Prostate gland (tissue), 2 donors: ENCODE measurements at regions of chr10 and their contacts with region 1.

Region 1: GRCh38 chr10:103605359-103606095 is 112.0 kb downstream of the NEURL1 start:
- DNase-seq: peak; percentile 24
- H3K4me3 ChIP-seq: no peak overlapping the region
- H3K27ac ChIP-seq: no peak overlapping the region
- H3K4me1 ChIP-seq: no peaks in the 10 kb centered on the region
- H3K27me3 ChIP-seq: no peaks in the 10 kb centered on the region
- CTCF ChIP-seq: peak; percentile 45 to 82 (median 62)
- POLR2A ChIP-seq: no peak

Region 2: DNA sequence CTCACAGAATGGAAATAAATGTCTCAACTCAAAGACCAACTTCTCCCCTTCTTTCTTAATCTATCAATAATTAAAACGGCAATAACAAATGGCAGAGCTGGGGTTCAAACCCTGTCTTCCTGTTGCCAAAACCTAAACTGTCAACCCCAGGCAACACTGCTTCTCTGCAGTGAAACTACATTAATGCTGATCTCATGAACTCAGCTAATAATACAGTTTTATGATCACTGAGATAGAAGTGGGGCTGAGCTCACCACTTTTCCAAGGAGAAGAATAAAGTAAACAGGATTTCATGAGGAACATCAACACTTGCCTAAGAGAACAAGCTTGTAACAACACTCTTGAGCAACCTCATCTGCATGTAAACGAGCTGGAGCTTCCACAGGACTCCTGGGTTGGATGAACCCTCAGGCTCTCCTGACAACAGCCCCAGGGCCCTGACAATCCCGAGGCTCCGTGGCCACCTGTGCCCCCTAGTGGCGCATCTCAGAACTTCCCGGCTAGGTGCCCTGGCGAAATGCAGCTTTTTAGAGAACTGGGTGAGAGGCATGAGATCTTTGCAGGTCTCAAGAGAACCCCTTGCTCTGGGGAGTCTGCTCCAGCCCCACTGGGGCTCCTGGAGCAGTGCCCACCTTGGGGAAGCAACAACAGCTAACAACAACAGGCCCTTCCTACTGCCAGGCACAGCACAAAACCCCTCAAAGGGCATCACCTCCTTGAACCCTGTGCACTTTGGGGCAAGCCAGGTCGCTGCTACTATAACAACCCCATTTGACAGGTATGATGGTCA is 80.5 kb after region 1 on chr10:
- intact Hi-C with region 1: loop called (anchors 2 kb)
- DNase-seq: peak; percentile 60
- H3K4me3 ChIP-seq: no peak overlapping the region
- H3K27ac ChIP-seq: peak overlapping the region; percentile 10 to 45
- H3K4me1 ChIP-seq: no peaks in the 10 kb centered on the region
- H3K27me3 ChIP-seq: no peaks in the 10 kb centered on the region
- CTCF ChIP-seq: peak; percentile 92 to 95 (median 95)
- POLR2A ChIP-seq: no peak

Region 3: DNA sequence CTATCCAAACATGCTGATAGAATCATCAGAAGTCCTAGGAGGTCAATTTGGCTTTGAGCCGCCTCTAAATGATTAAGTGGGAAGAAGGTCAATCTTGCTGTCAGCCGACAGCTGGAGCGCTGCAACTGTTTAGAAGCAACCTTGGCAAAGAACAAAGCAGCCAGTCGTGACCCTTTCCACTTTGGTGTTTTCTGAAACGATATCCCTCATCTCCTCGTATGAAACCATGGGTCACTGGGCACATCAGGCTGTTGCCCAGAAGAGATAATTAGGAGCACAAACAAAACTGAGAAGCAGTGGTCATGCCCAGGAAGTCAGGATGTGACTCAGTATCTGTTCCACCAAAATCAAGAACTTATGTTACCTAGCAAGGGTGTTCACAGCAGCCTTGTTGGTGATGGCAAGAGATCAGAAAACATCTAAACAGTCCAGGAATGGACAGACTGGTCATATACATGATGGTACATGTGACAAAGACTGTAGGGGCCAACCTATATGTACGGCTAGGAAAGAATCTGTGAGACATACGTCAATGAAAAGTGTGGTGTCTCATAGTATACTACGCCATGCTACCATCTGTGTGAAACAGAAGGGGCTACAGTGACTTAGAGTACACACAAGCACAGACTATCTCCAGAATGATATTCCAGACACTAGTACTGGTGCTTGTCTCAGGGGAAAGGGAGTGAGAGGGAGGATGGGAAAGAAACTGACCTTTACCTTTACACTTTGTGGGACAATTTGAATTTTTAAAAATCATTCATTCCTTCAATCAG is 290.1 kb after region 1 on chr10:
- intact Hi-C with region 1: no loop called
- DNase-seq: no peak
- H3K4me3 ChIP-seq: no peak overlapping the region
- H3K27ac ChIP-seq: peak overlapping the region; percentile 20 to 26
- H3K4me1 ChIP-seq: no peaks in the 10 kb centered on the region
- H3K27me3 ChIP-seq: no peaks in the 10 kb centered on the region
- CTCF ChIP-seq: no peak
- POLR2A ChIP-seq: no peak